Activated T-helper 1 cell treated with anti-CD3 and anti-CD28 coated beads, Interleukin-12 subunit alpha, Interleukin-12 subunit beta, Interleukin-2, Interleukin-4 antibody, amounts not matched to agents 30 ng/mL and 10 ng/mL and 1 ng/mL, durations not matched to agents 14 hours and 24 hours and 36 hours (primary cell): ENCODE measurements at regions of chr9 and their contacts with region 1.

Region 1: GRCh38 chr9:132240753-132241493 is 79.1 kb downstream of the NTNG2 start:
- DNase-seq: peak; percentile 98
- H3K4me3 Mint-ChIP-seq: peak overlapping the region; percentile 94
- H3K27ac Mint-ChIP-seq: peak overlapping the region; percentile 78
- H3K4me1 Mint-ChIP-seq: peaks cover 15% of the 10 kb centered on the region
- H3K27me3 Mint-ChIP-seq: peaks cover 8% of the 10 kb centered on the region

Region 2: GRCh38 chr9:131755541-131756198 is 485.3 kb before region 1 on chr9:
- intact Hi-C with region 1: loop called (anchors 1 kb)
- DNase-seq: peak; percentile 76
- H3K4me3 Mint-ChIP-seq: no peak overlapping the region
- H3K27ac Mint-ChIP-seq: peak overlapping the region; percentile 29
- H3K4me1 Mint-ChIP-seq: peaks cover 21% of the 10 kb centered on the region
- H3K27me3 Mint-ChIP-seq: peaks cover 32% of the 10 kb centered on the region

Region 3: DNA sequence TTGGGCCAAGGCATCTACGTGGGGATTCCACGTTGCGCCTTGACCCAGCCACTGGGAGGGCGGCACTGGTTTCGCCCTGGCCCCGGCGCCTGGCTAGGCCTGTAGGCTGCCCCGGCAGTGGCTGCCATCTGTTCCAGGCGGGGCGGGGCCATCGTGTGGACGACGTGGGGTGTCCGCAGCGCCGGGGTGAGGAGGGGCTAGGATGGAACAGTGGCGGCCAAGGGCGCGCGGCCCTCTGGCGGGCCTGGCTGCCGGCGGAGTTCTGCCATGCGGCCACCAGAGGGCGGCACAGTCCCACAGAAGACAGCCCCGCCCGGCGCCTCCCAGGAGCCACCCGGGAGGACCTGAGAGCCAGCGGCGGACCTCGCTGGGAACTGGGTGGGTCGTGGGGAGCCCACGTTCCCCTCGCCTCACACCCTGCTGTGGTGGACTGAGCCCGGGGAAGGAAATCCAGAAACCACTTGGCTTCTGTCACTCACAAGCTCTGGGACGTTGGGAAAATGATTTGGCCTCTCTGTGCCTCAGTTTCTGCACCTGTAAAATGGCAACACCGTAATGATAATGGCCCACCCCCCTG is 478.5 kb before region 1 on chr9:
- intact Hi-C with region 1: loop called (anchors 1 kb)
- DNase-seq: peak; percentile 62
- H3K4me3 Mint-ChIP-seq: no peak overlapping the region
- H3K27ac Mint-ChIP-seq: no peak overlapping the region
- H3K4me1 Mint-ChIP-seq: peaks cover 12% of the 10 kb centered on the region
- H3K27me3 Mint-ChIP-seq: peaks cover 35% of the 10 kb centered on the region

Region 4: DNA sequence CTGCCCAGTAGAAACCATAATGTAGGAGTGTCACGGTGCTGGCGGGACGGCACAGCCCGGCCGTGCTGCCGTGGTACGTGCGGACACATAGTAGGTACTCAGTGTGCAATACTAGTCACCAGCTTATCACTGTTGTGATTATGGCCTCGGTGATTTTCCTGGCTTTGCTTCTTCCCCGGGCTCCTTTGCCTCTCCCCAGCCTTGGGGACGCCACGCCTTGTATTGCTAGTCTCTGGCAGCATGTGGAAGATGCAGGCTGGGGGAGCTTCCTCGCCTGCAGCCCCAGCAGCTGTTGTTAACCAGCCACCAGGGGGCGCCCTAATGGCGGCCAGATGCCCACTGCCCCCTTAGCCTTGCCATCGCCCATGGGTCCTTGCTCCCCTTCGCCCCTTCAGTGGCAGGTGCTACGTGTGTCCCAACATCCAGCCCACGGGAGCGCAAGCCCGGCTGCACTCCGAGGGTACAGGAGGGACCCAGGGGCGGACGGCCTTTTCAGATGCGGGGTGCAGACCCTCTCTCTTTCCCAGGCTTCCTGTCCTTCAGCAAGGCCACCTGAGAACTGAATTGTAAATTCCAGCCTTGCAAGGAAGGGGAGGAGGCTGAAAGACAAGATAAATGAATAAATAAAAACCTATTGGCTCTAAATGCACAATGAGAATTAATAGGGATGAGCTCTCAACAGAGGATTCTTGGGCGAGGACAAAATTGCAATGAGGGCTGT is 71.1 kb before region 1 on chr9:
- intact Hi-C with region 1: loop called (anchors 1 kb)
- DNase-seq: peak; percentile 35
- H3K4me3 Mint-ChIP-seq: no peak overlapping the region
- H3K27ac Mint-ChIP-seq: no peak overlapping the region
- H3K4me1 Mint-ChIP-seq: no peaks in the 10 kb centered on the region
- H3K27me3 Mint-ChIP-seq: peaks cover 19% of the 10 kb centered on the region

Region 5: GRCh38 chr9:132260846-132261245 is 19.9 kb after region 1 on chr9:
- intact Hi-C with region 1: loop called (anchors 2 kb)
- DNase-seq: no peak
- H3K4me3 Mint-ChIP-seq: no peak overlapping the region
- H3K27ac Mint-ChIP-seq: no peak overlapping the region
- H3K4me1 Mint-ChIP-seq: peaks cover 7% of the 10 kb centered on the region
- H3K27me3 Mint-ChIP-seq: no peaks in the 10 kb centered on the region

Region 6: DNA sequence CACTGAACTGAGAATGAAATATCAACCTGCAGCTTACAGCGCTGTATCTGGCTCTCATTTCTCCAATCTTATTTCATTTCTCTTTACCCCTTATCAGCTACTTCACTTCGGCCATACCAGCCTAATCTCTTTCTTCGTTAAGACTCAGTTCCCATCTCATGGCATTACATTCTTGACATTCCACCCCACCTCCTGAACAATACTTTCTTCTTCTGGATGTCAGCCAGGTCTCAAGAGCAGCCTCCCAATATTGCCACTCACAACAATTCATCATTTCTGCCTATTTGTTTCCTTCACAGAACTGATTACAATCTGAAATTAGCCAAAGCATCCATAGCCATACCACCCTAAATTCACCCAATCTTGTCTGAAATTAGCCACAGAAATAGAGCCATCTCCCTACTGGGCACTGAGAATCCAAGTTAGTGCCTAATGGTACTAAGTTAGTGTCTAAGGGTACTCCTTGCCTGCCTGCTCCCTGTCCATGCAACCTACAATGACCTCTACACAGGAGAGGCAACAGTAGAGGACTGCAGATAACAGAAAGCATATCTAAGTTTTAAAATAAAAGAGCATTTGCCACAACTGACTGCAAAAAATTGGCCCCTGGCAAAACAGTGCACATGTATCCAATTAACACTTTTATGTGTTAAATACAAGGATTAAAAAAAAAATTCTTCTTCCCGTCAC is 78.6 kb after region 1 on chr9:
- intact Hi-C with region 1: no loop called
- DNase-seq: no peak
- H3K4me3 Mint-ChIP-seq: no peak overlapping the region
- H3K27ac Mint-ChIP-seq: no peak overlapping the region
- H3K4me1 Mint-ChIP-seq: peaks cover 18% of the 10 kb centered on the region
- H3K27me3 Mint-ChIP-seq: no peaks in the 10 kb centered on the region